ENCODE measurements at regions of chr11 and their contacts with region 1.

Region 1: GRCh38 chr11:77351281-77351906 is 49.9 kb upstream of the GDPD4 start:
- DNase-seq: peak; percentile 69
- H3K4me3 ChIP-seq: peak overlapping the region in 1 of 3 experiments; percentile 17
- H3K27ac ChIP-seq: peak overlapping the region; percentile 79
- H3K4me1 ChIP-seq: peaks cover 29% of the 10 kb centered on the region
- H3K27me3 ChIP-seq: no peaks in the 10 kb centered on the region
- CTCF ChIP-seq: no peak

Region 2: DNA sequence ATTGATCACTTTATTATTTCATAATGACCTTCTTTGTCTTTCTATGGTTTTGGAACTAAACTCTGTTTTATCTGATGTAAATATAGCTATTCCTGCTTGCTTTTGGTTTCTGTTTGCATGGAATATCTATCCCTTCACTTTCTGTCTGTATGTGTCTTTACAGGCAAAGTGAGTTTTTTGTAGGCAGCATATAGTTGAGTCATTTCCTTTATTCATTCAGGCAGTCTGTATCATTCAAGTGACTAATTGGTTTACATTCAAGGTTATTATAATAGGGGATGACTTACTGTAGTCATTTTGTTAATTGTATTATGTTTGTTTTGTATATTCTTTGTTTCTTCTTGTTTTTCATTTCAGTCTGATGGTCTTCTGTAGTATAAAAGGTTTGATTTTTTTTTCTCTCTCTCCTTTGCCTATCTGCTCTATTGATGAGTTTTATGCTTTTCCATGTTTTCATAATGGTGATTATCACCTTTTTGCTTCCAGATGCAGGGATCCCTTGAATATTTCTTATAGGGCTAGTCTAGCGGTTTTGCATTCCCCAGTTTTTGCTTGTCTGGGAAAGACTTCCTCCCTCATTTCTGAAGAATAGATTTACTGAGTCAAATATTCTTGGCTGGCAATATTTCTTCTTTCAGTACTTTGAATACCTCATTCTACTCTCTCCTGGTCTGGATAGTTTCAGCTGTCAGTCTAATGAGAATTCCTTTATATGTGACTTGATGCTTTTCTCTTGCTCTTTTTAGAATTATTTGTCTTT is 100.3 kb before region 1 on chr11:
- CTCF ChIA-PET with region 1: no interaction called
- dilution Hi-C with region 1: no loop called
- in situ Hi-C with region 1: no loop called
- intact Hi-C with region 1: loop called (anchors 5 kb)
- DNase-seq: peak; percentile 88
- H3K4me3 ChIP-seq: peak overlapping the region in 1 of 3 experiments; percentile 35
- H3K27ac ChIP-seq: peak overlapping the region; percentile 85
- H3K4me1 ChIP-seq: peaks cover 41% of the 10 kb centered on the region
- H3K27me3 ChIP-seq: no peaks in the 10 kb centered on the region
- CTCF ChIP-seq: no peak

Measured in mammary epithelial cell (primary cell).